Ovary (tissue), 10 donors: ENCODE measurements at regions of chr3 and their contacts with region 1.

Region 1: DNA sequence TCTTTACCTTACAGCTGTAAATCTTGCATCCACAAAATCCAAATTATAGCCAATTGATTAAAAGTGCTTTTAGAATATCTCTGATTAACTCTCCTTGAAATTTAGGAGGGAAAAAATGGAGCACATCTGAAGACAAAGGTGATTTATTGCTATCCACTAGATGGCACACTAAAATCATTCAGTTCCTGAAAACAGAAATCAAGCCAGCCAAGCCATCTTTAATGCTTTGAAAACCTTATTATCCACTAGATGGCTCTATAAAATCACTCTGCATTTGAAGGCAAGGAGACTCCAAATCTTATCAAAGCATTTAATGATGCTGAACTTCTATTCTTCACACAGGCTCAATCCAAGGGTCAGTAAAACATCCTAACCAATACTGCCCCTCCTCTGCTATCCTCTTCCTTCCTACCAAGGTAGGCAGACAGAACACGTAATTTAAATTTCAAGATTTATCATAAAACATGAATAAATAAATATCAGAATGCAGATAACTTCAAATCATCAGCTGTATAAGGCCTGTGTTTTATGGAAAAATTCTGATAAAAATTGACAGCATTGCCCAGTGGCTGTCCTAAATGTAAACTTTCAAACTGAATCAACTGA is 48.4 kb downstream of the GOLIM4 start:
- DNase-seq: no peak
- H3K4me3 ChIP-seq: no peak overlapping the region
- H3K27ac ChIP-seq: no peak overlapping the region
- H3K4me1 ChIP-seq: no peaks in the 10 kb centered on the region
- H3K27me3 ChIP-seq: no peaks in the 10 kb centered on the region
- CTCF ChIP-seq: peak; percentile 47 to 77 (median 76)
- EP300 ChIP-seq: no peak
- POLR2A ChIP-seq: no peak

Region 2: DNA sequence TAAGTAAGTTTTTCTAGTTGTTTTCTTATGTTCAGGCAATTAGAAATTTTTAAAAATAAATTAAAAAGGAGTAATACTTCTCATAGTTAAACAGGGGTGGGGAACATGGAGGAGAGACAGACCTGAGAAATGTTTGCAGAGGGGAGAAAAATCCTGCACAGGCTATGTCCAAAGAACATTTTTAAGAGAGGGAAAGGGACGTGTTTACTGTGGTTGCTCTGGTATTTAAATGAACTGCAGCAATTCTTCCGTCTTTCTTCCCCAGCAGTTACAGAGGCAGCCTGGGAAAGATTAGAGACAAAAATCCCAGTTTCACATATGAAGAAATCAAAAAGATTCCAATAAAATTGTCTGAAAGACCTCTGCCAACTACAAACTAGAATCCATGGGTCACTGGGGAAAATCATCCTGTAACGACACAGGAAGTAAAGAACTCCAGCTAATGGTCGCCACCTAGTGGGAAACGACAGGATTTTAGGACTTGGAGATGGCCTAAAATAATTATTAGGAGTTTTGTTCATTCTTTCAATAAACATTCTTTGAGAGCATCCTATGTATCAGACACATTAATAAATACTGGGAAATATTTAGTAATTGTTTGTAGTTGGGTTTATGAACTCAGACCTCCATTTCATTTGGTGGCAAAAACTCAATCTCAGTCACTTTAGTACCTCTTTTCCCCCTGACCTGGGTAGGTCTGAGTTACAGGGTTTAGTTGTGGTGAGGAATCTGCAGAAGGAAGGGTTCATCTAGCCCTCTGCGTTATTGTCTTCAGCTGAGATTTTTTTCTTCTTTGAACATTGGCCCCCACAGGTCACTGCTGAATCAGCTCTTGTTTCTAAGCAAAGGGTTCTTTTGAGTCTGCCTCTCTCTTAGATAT is 118.3 kb after region 1 on chr3:
- intact Hi-C with region 1: loop called (anchors 2 to 5 kb)
- DNase-seq: peak in 4 of 5 donors; percentile 30 to 65 (median 47)
- H3K4me3 ChIP-seq: no peak overlapping the region
- H3K27ac ChIP-seq: no peak overlapping the region
- H3K4me1 ChIP-seq: no peaks in the 10 kb centered on the region
- H3K27me3 ChIP-seq: no peaks in the 10 kb centered on the region
- CTCF ChIP-seq: peak in 2 of 3 donors; percentile 71 to 77
- EP300 ChIP-seq: no peak
- POLR2A ChIP-seq: no peak